ENCODE measurements at regions of chr3 and their contacts with region 1.

Region 1: GRCh38 chr3:130111185-130111864 is 29.7 kb downstream of the ALG1L2 start:
- DNase-seq: peak; percentile 89
- ATAC-seq: peak; percentile 100
- H3K4me3 ChIP-seq: peak overlapping the region; percentile 76
- H3K27ac ChIP-seq: peak overlapping the region; percentile 86
- H3K4me1 ChIP-seq: peaks cover 2% of the 10 kb centered on the region; the same call in 1 of the 2 replicates
- H3K27me3 ChIP-seq: no peaks in the 10 kb centered on the region
- CTCF ChIP-seq: no peak

Region 2: DNA sequence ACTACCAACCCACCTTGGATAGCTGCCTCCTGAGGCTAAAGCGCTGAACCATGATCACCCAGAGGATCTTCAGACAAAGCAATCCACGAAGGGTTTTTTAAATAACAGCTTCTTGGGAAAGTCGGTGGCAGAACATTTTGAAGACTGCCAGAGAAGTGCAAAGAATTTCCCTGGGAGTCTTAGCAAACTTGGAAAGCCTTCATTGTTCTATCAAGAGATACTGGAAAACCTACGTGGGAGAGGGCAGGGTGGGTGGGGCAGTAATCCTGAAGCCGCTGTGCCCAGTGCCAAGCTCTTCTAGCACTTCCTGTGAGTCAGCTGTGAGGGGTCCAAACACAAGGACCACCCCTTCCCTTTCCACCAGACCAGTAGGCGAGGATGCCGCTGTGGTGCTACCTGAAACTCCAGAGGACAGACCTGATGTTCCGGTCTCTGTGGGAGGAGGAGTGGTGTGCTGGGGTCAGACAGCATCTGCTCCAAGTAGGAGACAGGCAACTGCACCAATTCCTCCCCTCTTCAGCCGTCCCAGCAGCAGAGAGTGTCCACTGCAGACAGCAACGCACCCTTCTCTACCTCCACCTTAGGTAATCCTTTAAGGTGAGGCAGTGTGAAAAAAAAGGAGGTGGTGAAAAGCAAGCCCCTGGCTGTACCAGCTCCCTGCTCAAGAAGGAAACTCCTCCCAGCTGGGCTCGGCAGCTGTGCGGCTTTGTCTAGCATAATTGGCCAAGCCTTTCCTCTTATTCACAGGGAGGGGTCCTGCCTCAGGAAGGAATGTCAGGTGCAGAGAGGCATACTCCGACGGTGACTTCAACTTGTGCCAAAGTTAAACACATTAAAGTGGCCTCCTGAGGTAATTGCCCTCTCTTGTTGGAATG is 316.8 kb before region 1 on chr3:
- CTCF ChIA-PET with region 1: no interaction called
- POLR2A ChIA-PET with region 1: no interaction called
- intact Hi-C with region 1: no loop called
- DNase-seq: peak; percentile 92
- ATAC-seq: peak; percentile 80
- H3K4me3 ChIP-seq: peak overlapping the region; percentile 90
- H3K27ac ChIP-seq: peak overlapping the region; percentile 99
- H3K4me1 ChIP-seq: peaks cover 36% of the 10 kb centered on the region
- H3K27me3 ChIP-seq: no peaks in the 10 kb centered on the region
- CTCF ChIP-seq: no peak

Region 3: GRCh38 chr3:129942296-129942695 is 169.0 kb before region 1 on chr3:
- CTCF ChIA-PET with region 1: no interaction called
- POLR2A ChIA-PET with region 1: no interaction called
- intact Hi-C with region 1: loop called (anchors 5 kb)
- DNase-seq: peak; percentile 63
- ATAC-seq: peak; percentile 83
- H3K4me3 ChIP-seq: no peak overlapping the region
- H3K27ac ChIP-seq: no peak overlapping the region
- H3K4me1 ChIP-seq: no peaks in the 10 kb centered on the region
- H3K27me3 ChIP-seq: peaks cover 4% of the 10 kb centered on the region; the same call in 1 of the 2 replicates
- CTCF ChIP-seq: peak; percentile 67

Region 4: DNA sequence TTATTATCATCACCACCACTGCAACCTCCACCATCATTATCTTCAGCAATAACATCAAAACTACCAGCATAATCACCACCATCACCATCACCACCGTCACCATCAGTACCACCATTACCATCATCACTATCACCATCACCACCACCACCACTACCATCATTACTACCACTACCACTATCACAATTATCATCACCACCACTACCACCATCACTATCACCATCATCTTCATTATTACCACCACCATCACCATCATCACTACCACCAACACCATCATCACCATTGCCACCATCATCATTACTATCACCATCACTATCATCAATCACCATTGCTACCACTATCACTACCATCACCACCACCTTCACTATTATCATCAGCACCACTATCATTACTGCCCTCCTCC is 125.1 kb after region 1 on chr3:
- CTCF ChIA-PET with region 1: no interaction called
- POLR2A ChIA-PET with region 1: interaction called, 10 read pairs
- intact Hi-C with region 1: no loop called
- DNase-seq: no peak
- ATAC-seq: no peak
- H3K4me3 ChIP-seq: no peak overlapping the region
- H3K27ac ChIP-seq: no peak overlapping the region
- H3K4me1 ChIP-seq: no peaks in the 10 kb centered on the region
- H3K27me3 ChIP-seq: peaks cover 19% of the 10 kb centered on the region
- CTCF ChIP-seq: no peak